Colonic mucosa (tissue), 4 donors: ENCODE measurements at regions of chr5 and their contacts with region 1.

Region 1: GRCh38 chr5:76544268-76544926 is 78.8 kb downstream of the F2RL2 start:
- DNase-seq: peak; percentile 67
- H3K4me3 ChIP-seq: no peak overlapping the region
- H3K27ac ChIP-seq: peak overlapping the region; percentile 14
- H3K4me1 ChIP-seq: peaks cover 28% of the 10 kb centered on the region
- H3K27me3 ChIP-seq: no peaks in the 10 kb centered on the region
- CTCF ChIP-seq: peak; percentile 68

Region 2: GRCh38 chr5:76402886-76403765 is 141.3 kb before region 1 on chr5 and contains the start of gene IQGAP2:
- intact Hi-C with region 1: loop called (anchors 2 kb)
- DNase-seq: peak; percentile 81
- H3K4me3 ChIP-seq: peak within 1 kb of the TSS; percentile 83
- H3K27ac ChIP-seq: peak within 1 kb of the TSS; percentile 80
- H3K4me1 ChIP-seq: no peaks in the 10 kb centered on the region
- H3K27me3 ChIP-seq: no peaks in the 10 kb centered on the region
- CTCF ChIP-seq: peak; percentile 87
- total RNA-seq, gene IQGAP2: 62.2 to 75.6 TPM